ENCODE measurements at regions of chr13 and their contacts with region 1.

Region 1: DNA sequence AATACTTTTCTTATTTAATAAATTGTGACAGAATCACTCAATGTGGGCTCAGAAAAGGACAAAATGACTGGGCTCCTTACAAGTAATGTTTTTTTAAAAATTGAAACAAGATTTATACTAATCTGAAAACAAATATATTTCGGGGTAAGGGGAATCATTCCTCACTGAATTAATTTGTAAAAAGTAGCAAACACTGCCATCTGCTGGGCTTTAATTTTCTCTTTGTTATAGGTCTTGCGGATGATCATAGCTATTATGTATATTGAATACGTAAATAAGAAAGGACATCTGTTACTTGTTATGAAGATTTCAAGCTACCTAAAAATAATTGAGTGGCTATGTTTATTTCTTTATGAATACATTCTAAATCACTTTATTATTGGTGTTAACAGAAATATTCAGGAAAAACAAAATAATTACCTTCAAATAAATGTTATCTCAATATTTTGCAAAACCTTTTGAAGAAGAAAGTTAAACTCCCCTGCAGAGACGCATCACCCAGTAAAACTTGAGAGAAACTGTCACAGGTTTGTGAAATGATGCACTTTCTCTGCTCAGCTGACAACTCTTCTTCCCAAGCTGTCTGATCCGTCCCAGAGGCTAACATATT is 17.8 kb upstream of the ENOX1 start:
- DNase-seq: peak; percentile 84

Region 2: GRCh38 chr13:42883771-42884467 is 920.6 kb before region 1 on chr13:
- in situ Hi-C with region 1: loop called (anchors 25 kb)
- DNase-seq: peak; percentile 87

Region 3: GRCh38 chr13:43484432-43485225 is 319.9 kb before region 1 on chr13:
- in situ Hi-C with region 1: no loop called
- DNase-seq: peak; percentile 98

Region 4: GRCh38 chr13:44075113-44075512 is 270.5 kb after region 1 on chr13:
- in situ Hi-C with region 1: no loop called
- DNase-seq: no peak

Measured in SK-MEL-5 (cell line).